ENCODE measurements at regions of chr7 and their contacts with region 1.

Region 1: GRCh38 chr7:139370301-139370942 is 10.7 kb downstream of the LUC7L2 start:
- DNase-seq: no peak
- ATAC-seq: peak; percentile 58
- H3K4me3 ChIP-seq: no peak overlapping the region
- H3K27ac ChIP-seq: peak overlapping the region; percentile 20; the same call in 2 of the 3 replicates
- H3K4me1 ChIP-seq: peaks cover 0 to 20% of the 10 kb centered on the region in 2 experiments; a peak in 3 of 5 replicates
- H3K27me3 ChIP-seq: no peaks in the 10 kb centered on the region
- CTCF ChIP-seq: no peak
- EP300 ChIP-seq: no peak
- POLR2A ChIP-seq: no peak
- RAD21 ChIP-seq: no peak

Region 2: DNA sequence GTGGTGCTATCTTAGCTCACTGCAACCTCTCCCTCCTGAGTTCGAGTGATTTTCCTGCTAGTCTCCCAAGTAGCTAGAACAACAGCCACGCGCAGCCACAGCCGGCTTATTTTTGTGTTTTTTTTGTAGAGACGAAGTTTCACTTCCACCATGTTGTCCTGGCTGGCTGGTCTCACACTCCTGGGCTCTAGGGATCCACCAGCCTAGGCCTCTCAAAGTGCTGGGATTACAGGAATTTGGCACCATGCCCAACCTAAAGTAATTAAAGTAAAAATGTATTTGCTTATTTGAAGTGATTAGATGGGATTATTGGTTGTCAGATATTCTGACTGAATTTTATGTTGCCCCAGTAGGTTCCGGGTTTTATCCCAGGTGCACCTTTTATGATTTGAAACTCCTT is 12.0 kb after region 1 on chr7:
- CTCF ChIA-PET with region 1: interaction called, 3 read pairs
- POLR2A ChIA-PET with region 1: interaction called, 11 read pairs
- in situ Hi-C with region 1: no loop called
- intact Hi-C with region 1: no loop called
- DNase-seq: no peak
- ATAC-seq: no peak; the same call in 2 of the 3 replicates
- H3K4me3 ChIP-seq: no peak overlapping the region
- H3K27ac ChIP-seq: no peak overlapping the region
- H3K4me1 ChIP-seq: peaks cover 0 to 4% of the 10 kb centered on the region in 2 experiments; a peak in 1 of 5 replicates
- H3K27me3 ChIP-seq: no peaks in the 10 kb centered on the region
- CTCF ChIP-seq: no peak
- EP300 ChIP-seq: no peak
- POLR2A ChIP-seq: no peak
- RAD21 ChIP-seq: no peak

Measured in K562 (cell line).